ENCODE measurements at regions of chr7 and their contacts with region 1.

Region 1: DNA sequence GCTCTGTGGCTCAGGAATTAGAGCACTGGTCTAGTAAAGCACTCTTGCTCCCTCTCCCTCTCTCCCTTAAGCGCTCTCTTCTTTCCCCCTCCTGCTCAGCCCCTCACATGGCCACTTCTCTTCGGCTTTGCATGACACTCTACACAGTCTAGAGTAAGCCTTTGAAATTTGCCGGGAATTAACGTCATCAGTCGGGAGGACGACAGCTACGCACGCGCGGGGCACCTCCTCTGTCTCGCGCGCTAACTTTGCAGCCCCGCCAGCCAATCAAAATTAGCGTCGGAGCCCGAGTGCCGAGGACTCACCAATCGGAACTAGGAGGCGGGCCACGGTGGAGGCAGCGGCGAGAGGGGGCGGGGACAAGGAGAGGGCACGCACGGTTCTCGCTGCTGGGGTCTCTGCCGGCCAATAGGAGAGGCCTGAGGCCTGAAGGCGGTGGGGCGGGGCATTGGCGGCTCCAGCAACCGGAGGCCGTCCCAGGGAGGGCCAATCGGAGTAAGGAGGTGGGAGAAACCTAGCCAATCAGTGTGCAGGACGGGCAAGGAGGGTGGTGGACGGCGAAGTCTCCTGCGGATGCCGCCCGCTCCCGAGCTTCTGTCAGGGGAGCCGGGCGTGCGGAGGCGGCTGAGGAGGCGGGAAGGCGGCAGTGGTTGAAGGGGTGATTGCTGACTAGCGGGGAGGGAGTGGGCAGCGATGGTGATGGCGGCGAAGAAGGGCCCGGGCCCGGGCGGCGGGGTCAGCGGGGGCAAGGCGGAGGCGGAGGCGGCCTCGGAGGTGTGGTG is at the start of gene AGFG2:
- DNase-seq: peak; percentile 100
- H3K4me3 Mint-ChIP-seq: peak within 1 kb of the TSS; percentile 99
- H3K27ac Mint-ChIP-seq: peak within 1 kb of the TSS; percentile 93
- H3K4me1 Mint-ChIP-seq: peaks cover 36% of the 10 kb centered on the region
- H3K27me3 Mint-ChIP-seq: no peaks in the 10 kb centered on the region
- total RNA-seq, gene AGFG2: 75.5 and 75.7 TPM in 2 replicates

Region 2: GRCh38 chr7:100423315-100423714 is 115.5 kb before region 1 on chr7:
- intact Hi-C with region 1: no loop called
- DNase-seq: no peak
- H3K4me3 Mint-ChIP-seq: no peak overlapping the region
- H3K27ac Mint-ChIP-seq: no peak overlapping the region
- H3K4me1 Mint-ChIP-seq: peaks cover 2% of the 10 kb centered on the region
- H3K27me3 Mint-ChIP-seq: peaks cover 2% of the 10 kb centered on the region

Region 3: GRCh38 chr7:100478966-100479665 is 59.7 kb before region 1 on chr7 and contains the start of gene TSC22D4:
- intact Hi-C with region 1: loop called (anchors 2 kb)
- DNase-seq: peak; percentile 86
- H3K4me3 Mint-ChIP-seq: peak within 1 kb of the TSS; percentile 99
- H3K27ac Mint-ChIP-seq: peak within 1 kb of the TSS; percentile 88
- H3K4me1 Mint-ChIP-seq: peaks cover 26% of the 10 kb centered on the region
- H3K27me3 Mint-ChIP-seq: no peaks in the 10 kb centered on the region
- total RNA-seq, gene TSC22D4: 103 and 106 TPM in 2 replicates

Region 4: DNA sequence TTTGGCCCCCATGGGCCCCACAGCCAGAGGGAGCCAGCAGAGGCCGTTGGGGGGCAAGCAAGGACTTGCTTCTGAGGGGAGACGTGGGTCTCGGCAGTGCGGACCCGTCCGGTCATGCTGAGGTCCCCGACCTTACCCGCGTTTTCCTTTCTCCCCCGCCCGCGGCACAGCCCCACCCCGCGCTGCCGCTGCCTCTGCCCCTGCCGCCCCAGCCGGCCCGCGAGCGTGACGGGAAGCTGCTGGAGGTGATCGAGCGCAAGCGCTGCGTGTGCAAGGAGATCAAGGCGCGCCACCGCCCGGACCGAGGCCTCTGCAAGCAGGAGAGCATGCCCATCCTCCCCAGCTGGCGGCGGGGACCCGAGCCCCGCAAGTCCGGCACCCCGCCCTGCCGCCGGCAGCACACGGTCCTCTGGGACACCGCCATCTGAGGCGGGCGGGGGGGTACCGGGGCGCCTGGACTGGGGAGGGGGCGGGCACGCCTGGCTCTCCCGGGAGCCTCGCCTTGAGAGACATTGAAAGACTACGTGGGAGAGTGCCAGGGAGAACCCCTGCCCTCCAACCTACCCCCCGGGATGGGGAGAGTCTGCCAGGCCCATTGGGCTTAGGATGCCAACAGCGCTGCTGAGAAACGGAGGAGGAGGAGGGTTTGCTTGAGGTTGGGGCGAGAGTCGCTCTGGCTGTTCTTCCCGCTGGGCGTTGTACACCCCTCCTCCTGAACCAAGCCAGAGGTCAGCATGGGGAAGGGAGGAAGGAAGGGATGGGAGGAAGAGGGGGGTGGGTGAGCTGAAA is 45.2 kb before region 1 on chr7:
- intact Hi-C with region 1: loop called (anchors 2 kb)
- DNase-seq: peak; percentile 47
- H3K4me3 Mint-ChIP-seq: peak overlapping the region; percentile 51
- H3K27ac Mint-ChIP-seq: no peak overlapping the region
- H3K4me1 Mint-ChIP-seq: peaks cover 11% of the 10 kb centered on the region
- H3K27me3 Mint-ChIP-seq: peaks cover 18% of the 10 kb centered on the region

Region 5: DNA sequence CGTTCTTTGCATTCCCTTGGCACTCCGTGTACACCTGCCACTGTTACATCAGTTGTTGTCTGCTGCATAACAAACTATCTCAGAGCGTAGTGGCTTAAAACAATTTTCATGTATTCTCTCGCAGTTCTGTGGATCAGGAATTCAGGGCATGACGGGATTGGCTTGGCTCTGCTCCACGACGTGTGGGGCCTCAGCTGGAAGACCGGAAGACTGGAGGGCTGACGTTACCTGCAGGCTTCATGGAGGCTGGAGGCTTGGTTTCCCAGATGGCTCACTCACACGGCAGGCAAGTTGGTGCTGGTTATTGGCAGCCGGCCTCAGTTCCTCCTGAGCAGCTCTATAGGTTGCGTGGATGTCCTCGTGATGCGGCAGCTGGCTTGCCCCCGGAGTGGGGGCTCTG is 29.6 kb before region 1 on chr7:
- intact Hi-C with region 1: no loop called
- DNase-seq: no peak
- H3K4me3 Mint-ChIP-seq: no peak overlapping the region
- H3K27ac Mint-ChIP-seq: no peak overlapping the region
- H3K4me1 Mint-ChIP-seq: no peaks in the 10 kb centered on the region
- H3K27me3 Mint-ChIP-seq: peaks cover 9% of the 10 kb centered on the region

Region 6: GRCh38 chr7:100604028-100604975 is 65.5 kb after region 1 on chr7:
- intact Hi-C with region 1: loop called (anchors 1 kb)
- DNase-seq: peak; percentile 71
- H3K4me3 Mint-ChIP-seq: peak overlapping the region; percentile 79
- H3K27ac Mint-ChIP-seq: peak overlapping the region; percentile 84
- H3K4me1 Mint-ChIP-seq: peaks cover 6% of the 10 kb centered on the region
- H3K27me3 Mint-ChIP-seq: peaks cover 3% of the 10 kb centered on the region

Region 7: GRCh38 chr7:100763556-100764140 is 224.8 kb after region 1 on chr7:
- intact Hi-C with region 1: no loop called
- DNase-seq: no peak
- H3K4me3 Mint-ChIP-seq: no peak overlapping the region
- H3K27ac Mint-ChIP-seq: no peak overlapping the region
- H3K4me1 Mint-ChIP-seq: no peaks in the 10 kb centered on the region
- H3K27me3 Mint-ChIP-seq: peaks cover 2% of the 10 kb centered on the region

Measured in activated T-helper 2 cell treated with anti-CD3 and anti-CD28 coated beads, Interferon-gamma antibody, Interleukin-2, Interleukin-4, amounts not matched to agents 10 μg/mL and 5 μg/mL and 100 μg/mL, durations not matched to agents 14 hours and 24 hours and 36 hours (primary cell).